MCF 10A (cell line): ENCODE measurements at regions of chr20 and their contacts with region 1.

Region 1: GRCh38 chr20:21719592-21720214 is 14.2 kb downstream of the PAX1 start:
- DNase-seq: peak; percentile 69
- H3K4me3 Mint-ChIP-seq: no peak overlapping the region
- H3K27ac Mint-ChIP-seq: no peak overlapping the region
- H3K4me1 Mint-ChIP-seq: no peaks in the 10 kb centered on the region
- H3K27me3 Mint-ChIP-seq: peaks cover 40% of the 10 kb centered on the region
- CTCF ChIP-seq: peak; percentile 57

Region 2: DNA sequence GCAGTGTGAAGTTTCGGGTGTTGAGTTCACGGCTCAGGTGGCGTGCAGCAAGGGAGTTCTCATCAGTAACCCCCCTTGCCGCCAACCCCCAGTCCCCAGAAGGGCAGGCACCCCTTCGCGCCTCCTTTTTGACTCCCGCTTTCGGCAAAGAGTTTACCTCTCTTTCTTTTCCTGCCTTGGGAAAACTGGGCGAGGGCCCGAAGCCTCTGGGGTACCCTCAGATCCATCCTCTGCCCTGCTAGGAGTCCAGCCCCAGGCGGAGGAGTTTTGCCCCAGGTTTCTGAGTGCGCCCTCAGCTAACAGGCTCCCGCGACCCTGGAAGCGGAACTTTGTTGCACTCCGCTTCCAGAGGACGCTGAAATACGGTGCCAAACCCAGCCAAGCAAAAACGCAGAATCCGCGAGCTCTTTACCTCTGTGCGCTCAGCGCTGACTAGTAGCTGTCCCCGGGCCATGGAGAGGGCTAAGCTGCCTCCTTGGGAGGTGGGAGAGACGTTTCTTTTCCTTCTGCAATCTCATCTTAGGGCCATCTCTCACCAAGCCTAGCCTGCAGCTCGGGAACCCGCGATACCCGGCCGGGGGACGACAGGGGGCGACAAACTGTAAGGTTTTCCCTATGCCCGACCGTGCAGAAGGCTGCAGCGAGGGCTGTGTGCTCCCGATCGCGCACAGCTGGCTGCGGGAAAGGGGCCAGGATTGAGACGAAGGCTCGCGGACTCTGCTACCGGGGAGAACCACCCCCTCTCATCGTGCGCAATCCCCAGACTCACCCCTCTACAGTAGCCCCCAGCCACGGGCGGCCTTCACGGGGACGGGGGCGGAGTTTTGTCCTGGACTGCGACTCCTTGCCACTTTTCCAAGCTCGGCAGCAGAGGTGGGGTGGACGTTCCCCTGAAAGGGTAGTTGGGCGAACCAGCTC is 16.9 kb before region 1 on chr20:
- CTCF ChIA-PET with region 1: interaction called, 36 read pairs
- POLR2A ChIA-PET with region 1: interaction called, 5 read pairs
- intact Hi-C with region 1: no loop called
- DNase-seq: no peak
- H3K4me3 Mint-ChIP-seq: no peak overlapping the region
- H3K27ac Mint-ChIP-seq: no peak overlapping the region
- H3K4me1 Mint-ChIP-seq: no peaks in the 10 kb centered on the region
- H3K27me3 Mint-ChIP-seq: peaks cover 76% of the 10 kb centered on the region
- CTCF ChIP-seq: no peak

Region 3: DNA sequence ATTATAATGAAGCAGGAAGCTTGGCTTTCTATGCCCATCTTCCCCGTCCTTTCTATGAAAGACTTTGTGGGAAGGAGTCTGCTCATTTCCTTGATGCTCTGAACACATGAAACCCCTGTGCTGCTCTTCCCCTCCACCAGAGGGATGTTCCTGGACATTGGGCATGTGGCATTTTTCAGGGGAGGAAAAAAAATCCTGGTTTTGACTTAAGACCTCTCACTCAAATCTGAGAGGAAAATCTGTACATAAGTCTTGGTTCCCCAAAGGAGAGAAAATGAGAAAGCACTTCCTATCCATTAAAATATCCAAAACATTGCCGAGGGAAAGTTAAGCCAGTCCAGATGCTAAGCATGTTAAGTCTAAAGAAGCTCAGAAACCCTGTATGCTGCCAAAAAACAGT is 378.8 kb after region 1 on chr20:
- CTCF ChIA-PET with region 1: interaction called, 57 read pairs
- POLR2A ChIA-PET with region 1: no interaction called
- intact Hi-C with region 1: no loop called
- DNase-seq: no peak
- H3K4me3 Mint-ChIP-seq: no peak overlapping the region
- H3K27ac Mint-ChIP-seq: no peak overlapping the region
- H3K4me1 Mint-ChIP-seq: no peaks in the 10 kb centered on the region
- H3K27me3 Mint-ChIP-seq: peaks cover 31% of the 10 kb centered on the region
- CTCF ChIP-seq: no peak

Region 4: DNA sequence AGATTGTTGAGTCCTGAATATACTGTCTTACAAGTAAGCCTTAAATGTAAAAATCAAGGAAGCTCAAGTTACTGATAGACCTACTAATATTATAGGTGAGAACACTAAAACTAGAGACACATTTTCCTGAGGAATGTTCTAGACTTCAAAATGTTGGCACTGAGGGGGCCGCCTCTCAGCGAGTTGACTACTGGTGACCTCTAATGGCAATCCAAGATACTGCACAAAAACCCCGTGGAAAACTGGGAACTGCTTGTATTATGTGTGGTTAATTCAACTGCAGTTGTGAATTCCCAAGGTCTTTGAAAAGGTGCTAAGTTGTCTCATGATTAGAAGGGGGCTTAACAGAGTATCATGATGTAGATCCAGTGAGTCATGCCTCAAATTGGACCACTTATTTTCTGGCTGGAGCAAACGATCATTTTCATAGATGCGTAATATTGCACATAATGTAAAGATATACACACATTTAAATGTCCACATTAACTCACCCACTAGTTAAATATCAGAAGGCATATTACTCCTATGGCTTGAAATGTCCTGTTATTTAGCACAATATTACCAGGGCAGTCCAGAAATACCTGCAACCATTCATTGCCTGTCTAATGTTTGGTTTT is 528.5 kb after region 1 on chr20:
- CTCF ChIA-PET with region 1: interaction called, 11 read pairs
- POLR2A ChIA-PET with region 1: no interaction called
- intact Hi-C with region 1: loop called (anchors 1 kb)
- DNase-seq: peak; percentile 38
- H3K4me3 Mint-ChIP-seq: no peak overlapping the region
- H3K27ac Mint-ChIP-seq: no peak overlapping the region
- H3K4me1 Mint-ChIP-seq: no peaks in the 10 kb centered on the region
- H3K27me3 Mint-ChIP-seq: peaks cover 11% of the 10 kb centered on the region
- CTCF ChIP-seq: peak; percentile 52